HepG2 (cell line): ENCODE measurements at regions of chr6 and their contacts with region 1.

Region 1: DNA sequence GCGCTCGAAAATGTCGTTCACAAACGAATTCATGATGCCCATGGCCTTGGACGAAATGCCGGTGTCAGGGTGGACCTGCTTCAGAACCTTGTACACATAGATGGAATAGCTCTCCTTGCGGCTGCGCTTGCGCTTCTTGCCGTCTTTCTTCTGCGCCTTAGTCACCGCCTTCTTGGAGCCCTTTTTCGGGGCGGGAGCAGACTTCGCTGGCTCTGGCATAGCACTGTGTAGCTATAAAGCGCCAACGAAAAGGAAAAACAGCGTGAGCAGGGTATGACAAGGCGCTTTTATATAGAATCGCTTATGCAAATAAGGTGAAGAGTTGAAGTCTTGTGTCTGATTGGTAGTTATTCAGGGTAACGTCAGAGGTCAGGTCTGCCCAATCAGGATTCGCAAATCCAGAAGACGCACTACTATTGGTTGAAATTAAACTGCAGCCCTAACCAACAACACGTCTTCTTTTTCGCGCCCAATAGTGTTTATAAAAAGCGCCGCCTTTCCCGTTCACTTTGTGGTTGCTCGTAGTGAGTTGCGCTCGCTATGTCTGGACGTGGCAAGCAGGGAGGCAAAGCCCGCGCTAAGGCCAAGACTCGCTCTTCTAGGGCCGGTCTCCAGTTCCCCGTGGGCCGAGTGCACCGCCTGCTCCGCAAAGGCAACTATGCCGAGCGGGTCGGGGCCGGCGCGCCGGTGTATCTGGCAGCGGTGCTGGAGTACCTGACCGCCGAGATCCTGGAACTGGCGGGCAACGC is 114.8 kb upstream of the PRSS16 start:
- DNase-seq: peak; percentile 90
- ATAC-seq: peak; percentile 75
- H3K4me3 ChIP-seq: peak overlapping the region; percentile 40 to 62 (median 55); a peak in 5 of 6 replicates
- H3K27ac ChIP-seq: peak overlapping the region; percentile 78
- H3K4me1 ChIP-seq: peaks cover 42% of the 10 kb centered on the region
- H3K27me3 ChIP-seq: peaks cover 2 to 38% of the 10 kb centered on the region in 2 experiments; a peak in 4 of 5 replicates
- CTCF ChIP-seq: 0 out of 2 replicates have a peak, but pooled peaks have one; percentile 3
- EP300 ChIP-seq: no peak
- POLR2A ChIP-seq: peak; percentile 82 to 95
- RAD21 ChIP-seq: peak; percentile 18; the same call in 1 of the 2 replicates

Region 2: DNA sequence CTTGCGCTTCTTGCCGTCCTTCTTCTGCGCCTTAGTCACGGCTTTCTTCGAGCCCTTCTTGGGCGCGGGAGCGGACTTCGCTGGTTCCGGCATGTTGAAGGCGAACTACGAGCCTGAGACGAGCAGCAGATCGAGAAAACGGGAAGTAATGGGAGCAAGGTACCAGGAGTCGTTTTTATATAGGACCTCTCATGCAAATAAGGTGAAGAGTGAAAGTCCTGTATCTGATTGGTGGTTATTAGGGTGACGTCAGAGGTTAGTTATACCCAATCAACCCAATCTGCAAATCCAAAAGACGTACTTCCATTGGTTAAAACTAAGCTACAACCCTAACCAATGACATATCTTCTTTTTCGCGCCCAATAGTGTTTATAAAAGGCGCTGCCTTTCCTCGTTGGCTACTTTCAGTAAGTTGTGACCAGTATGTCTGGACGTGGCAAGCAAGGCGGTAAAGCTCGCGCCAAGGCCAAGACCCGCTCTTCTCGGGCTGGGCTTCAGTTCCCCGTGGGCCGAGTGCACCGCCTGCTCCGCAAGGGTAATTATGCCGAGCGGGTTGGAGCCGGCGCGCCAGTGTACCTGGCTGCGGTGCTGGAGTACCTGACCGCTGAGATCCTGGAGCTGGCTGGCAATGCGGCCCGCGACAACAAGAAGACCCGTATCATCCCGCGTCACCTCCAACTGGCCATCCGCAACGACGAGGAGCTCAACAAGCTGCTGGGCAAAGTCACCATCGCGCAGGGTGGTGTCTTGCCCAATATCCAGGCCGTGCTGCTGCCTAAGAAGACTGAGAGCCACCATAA is 14.2 kb after region 1 on chr6:
- CTCF ChIA-PET with region 1: no interaction called
- POLR2A ChIA-PET with region 1: interaction called, 24 read pairs
- in situ Hi-C with region 1: no loop called
- intact Hi-C with region 1: no loop called
- DNase-seq: peak; percentile 70
- ATAC-seq: peak; percentile 64
- H3K4me3 ChIP-seq: peak overlapping the region in 2 of 3 experiments; percentile 27 to 62; a peak in 4 of 6 replicates
- H3K27ac ChIP-seq: peak overlapping the region; percentile 31
- H3K4me1 ChIP-seq: peaks cover 27% of the 10 kb centered on the region
- H3K27me3 ChIP-seq: peaks cover 0 to 19% of the 10 kb centered on the region in 2 experiments; a peak in 4 of 5 replicates
- CTCF ChIP-seq: no peak
- EP300 ChIP-seq: no peak
- POLR2A ChIP-seq: peak; percentile 55 to 86
- RAD21 ChIP-seq: no peak

Region 3: GRCh38 chr6:27230758-27231111 is 98.0 kb after region 1 on chr6:
- CTCF ChIA-PET with region 1: no interaction called
- POLR2A ChIA-PET with region 1: no interaction called
- in situ Hi-C with region 1: no loop called
- intact Hi-C with region 1: no loop called
- DNase-seq: no peak
- ATAC-seq: peak; percentile 42
- H3K4me3 ChIP-seq: peak overlapping the region; percentile 9 to 60 (median 43); a peak in 5 of 6 replicates
- H3K27ac ChIP-seq: no peak overlapping the region
- H3K4me1 ChIP-seq: peaks cover 30% of the 10 kb centered on the region
- H3K27me3 ChIP-seq: no peaks in the 10 kb centered on the region; a peak in 1 of 5 replicates
- CTCF ChIP-seq: no peak
- EP300 ChIP-seq: no peak
- POLR2A ChIP-seq: no peak
- RAD21 ChIP-seq: no peak

Region 4: GRCh38 chr6:27368202-27368601 is 235.5 kb after region 1 on chr6:
- CTCF ChIA-PET with region 1: no interaction called
- POLR2A ChIA-PET with region 1: no interaction called
- in situ Hi-C with region 1: no loop called
- intact Hi-C with region 1: no loop called
- DNase-seq: no peak
- ATAC-seq: no peak
- H3K4me3 ChIP-seq: no peak overlapping the region
- H3K27ac ChIP-seq: no peak overlapping the region
- H3K4me1 ChIP-seq: no peaks in the 10 kb centered on the region
- H3K27me3 ChIP-seq: no peaks in the 10 kb centered on the region; a peak in 1 of 5 replicates
- CTCF ChIP-seq: no peak
- EP300 ChIP-seq: no peak
- POLR2A ChIP-seq: no peak
- RAD21 ChIP-seq: no peak